Endothelial cell of umbilical vein (primary cell): ENCODE measurements at regions of chr12 and their contacts with region 1.

Region 1: GRCh38 chr12:93677195-93678064 is at the start of gene CRADD:
- DNase-seq: peak; percentile 97
- H3K4me3 ChIP-seq: peak within 1 kb of the TSS; percentile 43 to 68 (median 67)
- H3K27ac ChIP-seq: peak within 1 kb of the TSS; percentile 82
- H3K4me1 ChIP-seq: peaks cover 10% of the 10 kb centered on the region
- H3K27me3 ChIP-seq: peaks cover 1 to 7% of the 10 kb centered on the region in 2 experiments
- CTCF ChIP-seq: no peak
- POLR2A ChIP-seq: peak; percentile 73
- total RNA-seq, gene CRADD: 8.0 and 11.7 TPM in 2 replicates

Region 2: GRCh38 chr12:93434256-93434865 is 243.1 kb before region 1 on chr12:
- CTCF ChIA-PET with region 1: no interaction called
- POLR2A ChIA-PET with region 1: no interaction called
- dilution Hi-C with region 1: no loop called
- intact Hi-C with region 1: no loop called
- DNase-seq: no peak
- H3K4me3 ChIP-seq: no peak overlapping the region
- H3K27ac ChIP-seq: no peak overlapping the region
- H3K4me1 ChIP-seq: peaks cover under 1% of the 10 kb centered on the region
- H3K27me3 ChIP-seq: no peaks in the 10 kb centered on the region
- CTCF ChIP-seq: no peak
- POLR2A ChIP-seq: no peak

Region 3: GRCh38 chr12:93624595-93625294 is 52.7 kb before region 1 on chr12:
- CTCF ChIA-PET with region 1: no interaction called
- POLR2A ChIA-PET with region 1: interaction called, 3 read pairs
- dilution Hi-C with region 1: no loop called
- intact Hi-C with region 1: loop called (anchors 2 kb)
- DNase-seq: peak; percentile 54
- H3K4me3 ChIP-seq: no peak overlapping the region
- H3K27ac ChIP-seq: peak overlapping the region; percentile 57
- H3K4me1 ChIP-seq: peaks cover 9% of the 10 kb centered on the region
- H3K27me3 ChIP-seq: no peaks in the 10 kb centered on the region
- CTCF ChIP-seq: no peak
- POLR2A ChIP-seq: no peak

Region 4: GRCh38 chr12:93661021-93661420 is 16.4 kb before region 1 on chr12:
- CTCF ChIA-PET with region 1: no interaction called
- POLR2A ChIA-PET with region 1: no interaction called
- dilution Hi-C with region 1: no loop called
- intact Hi-C with region 1: no loop called
- DNase-seq: no peak
- H3K4me3 ChIP-seq: no peak overlapping the region
- H3K27ac ChIP-seq: no peak overlapping the region
- H3K4me1 ChIP-seq: no peaks in the 10 kb centered on the region
- H3K27me3 ChIP-seq: peaks cover 7 to 8% of the 10 kb centered on the region in 2 experiments
- CTCF ChIP-seq: no peak
- POLR2A ChIP-seq: no peak

Region 5: GRCh38 chr12:93742110-93742934 is 64.9 kb after region 1 on chr12:
- CTCF ChIA-PET with region 1: no interaction called
- POLR2A ChIA-PET with region 1: no interaction called
- dilution Hi-C with region 1: no loop called
- intact Hi-C with region 1: loop called (anchors 1 kb)
- DNase-seq: peak; percentile 80
- H3K4me3 ChIP-seq: peak overlapping the region; percentile 34 to 82 (median 69)
- H3K27ac ChIP-seq: no peak overlapping the region
- H3K4me1 ChIP-seq: peaks cover 8% of the 10 kb centered on the region
- H3K27me3 ChIP-seq: no peaks in the 10 kb centered on the region
- CTCF ChIP-seq: peak; percentile 24 to 38
- POLR2A ChIP-seq: no peak

Region 6: GRCh38 chr12:93785262-93786010 is 108.0 kb after region 1 on chr12:
- CTCF ChIA-PET with region 1: no interaction called
- POLR2A ChIA-PET with region 1: no interaction called
- dilution Hi-C with region 1: no loop called
- intact Hi-C with region 1: loop called (anchors 1 kb)
- DNase-seq: peak; percentile 90
- H3K4me3 ChIP-seq: no peak overlapping the region
- H3K27ac ChIP-seq: peak overlapping the region; percentile 99
- H3K4me1 ChIP-seq: peaks cover 44% of the 10 kb centered on the region
- H3K27me3 ChIP-seq: no peaks in the 10 kb centered on the region
- CTCF ChIP-seq: no peak
- POLR2A ChIP-seq: peak; percentile 36